Activated naive CD4-positive, alpha-beta T cell treated with anti-CD3 and anti-CD28 coated beads, Interleukin-2, amount 10 ng/mL, durations not matched to agents 7 days and 5 days (primary cell): ENCODE measurements at regions of chr12 and their contacts with region 1.

Region 1: DNA sequence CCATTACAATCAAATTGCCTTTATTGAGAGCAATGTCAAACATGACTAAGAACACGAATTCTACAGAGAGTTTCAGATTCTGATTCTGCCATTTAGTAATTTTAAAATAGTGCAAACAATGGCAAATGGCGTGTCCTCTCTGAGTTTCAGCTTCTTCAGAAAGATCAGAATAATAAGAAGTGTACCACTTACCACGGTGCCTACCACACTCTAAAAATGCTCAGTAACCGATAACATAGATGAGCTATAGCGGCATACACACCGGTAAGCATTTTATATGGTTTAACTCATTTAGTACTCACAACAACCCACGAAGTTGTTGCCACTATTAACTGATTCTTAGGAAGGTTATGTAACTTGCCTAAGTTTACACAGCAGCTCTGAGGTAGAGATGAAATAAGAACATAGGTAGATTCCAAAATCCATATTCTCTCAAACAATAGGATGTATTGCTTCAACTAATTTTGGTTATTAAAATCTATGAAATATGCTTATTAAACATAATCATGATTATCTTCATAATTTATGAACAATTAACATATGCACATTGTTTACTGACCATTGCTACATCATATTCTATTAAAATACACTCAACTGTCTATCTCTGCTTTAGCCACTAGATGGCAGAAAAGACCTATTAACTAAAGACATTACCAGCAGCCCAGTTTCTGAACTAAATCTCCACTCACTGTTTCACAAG is 38.3 kb downstream of the SLC6A15 start:
- DNase-seq: no peak
- H3K4me3 Mint-ChIP-seq: no peak overlapping the region
- H3K27ac Mint-ChIP-seq: no peak overlapping the region
- H3K4me1 Mint-ChIP-seq: no peaks in the 10 kb centered on the region
- H3K27me3 Mint-ChIP-seq: no peaks in the 10 kb centered on the region

Region 2: GRCh38 chr12:85029456-85029855 is 155.2 kb after region 1 on chr12:
- CTCF ChIA-PET with region 1: interaction called, 44 read pairs
- DNase-seq: no peak
- H3K4me3 Mint-ChIP-seq: no peak overlapping the region
- H3K27ac Mint-ChIP-seq: no peak overlapping the region
- H3K4me1 Mint-ChIP-seq: no peaks in the 10 kb centered on the region
- H3K27me3 Mint-ChIP-seq: no peaks in the 10 kb centered on the region

Region 3: GRCh38 chr12:85057370-85057963 is 183.2 kb after region 1 on chr12:
- CTCF ChIA-PET with region 1: interaction called, 18 read pairs
- DNase-seq: peak; percentile 45
- H3K4me3 Mint-ChIP-seq: no peak overlapping the region
- H3K27ac Mint-ChIP-seq: no peak overlapping the region
- H3K4me1 Mint-ChIP-seq: no peaks in the 10 kb centered on the region
- H3K27me3 Mint-ChIP-seq: no peaks in the 10 kb centered on the region